ENCODE measurements at regions of chr1 and their contacts with region 1.

Region 1: GRCh38 chr1:21782868-21783678 is at the start of gene USP48:
- DNase-seq: peak; percentile 98
- ATAC-seq: peak; percentile 91
- H3K4me3 Mint-ChIP-seq: peak within 1 kb of the TSS; percentile 90
- H3K27ac Mint-ChIP-seq: peak within 1 kb of the TSS; percentile 100
- H3K4me1 Mint-ChIP-seq: peaks cover 19% of the 10 kb centered on the region
- H3K27me3 Mint-ChIP-seq: peaks cover 7% of the 10 kb centered on the region
- total RNA-seq, gene USP48: 79.6 to 85.2 TPM

Region 2: GRCh38 chr1:21793104-21793503 is 10.0 kb after region 1 on chr1:
- POLR2A ChIA-PET with region 1: interaction called, 10 read pairs
- DNase-seq: no peak
- ATAC-seq: no peak
- H3K4me3 Mint-ChIP-seq: no peak overlapping the region
- H3K27ac Mint-ChIP-seq: no peak overlapping the region
- H3K4me1 Mint-ChIP-seq: peaks cover 11% of the 10 kb centered on the region
- H3K27me3 Mint-ChIP-seq: peaks cover 6% of the 10 kb centered on the region

Region 3: DNA sequence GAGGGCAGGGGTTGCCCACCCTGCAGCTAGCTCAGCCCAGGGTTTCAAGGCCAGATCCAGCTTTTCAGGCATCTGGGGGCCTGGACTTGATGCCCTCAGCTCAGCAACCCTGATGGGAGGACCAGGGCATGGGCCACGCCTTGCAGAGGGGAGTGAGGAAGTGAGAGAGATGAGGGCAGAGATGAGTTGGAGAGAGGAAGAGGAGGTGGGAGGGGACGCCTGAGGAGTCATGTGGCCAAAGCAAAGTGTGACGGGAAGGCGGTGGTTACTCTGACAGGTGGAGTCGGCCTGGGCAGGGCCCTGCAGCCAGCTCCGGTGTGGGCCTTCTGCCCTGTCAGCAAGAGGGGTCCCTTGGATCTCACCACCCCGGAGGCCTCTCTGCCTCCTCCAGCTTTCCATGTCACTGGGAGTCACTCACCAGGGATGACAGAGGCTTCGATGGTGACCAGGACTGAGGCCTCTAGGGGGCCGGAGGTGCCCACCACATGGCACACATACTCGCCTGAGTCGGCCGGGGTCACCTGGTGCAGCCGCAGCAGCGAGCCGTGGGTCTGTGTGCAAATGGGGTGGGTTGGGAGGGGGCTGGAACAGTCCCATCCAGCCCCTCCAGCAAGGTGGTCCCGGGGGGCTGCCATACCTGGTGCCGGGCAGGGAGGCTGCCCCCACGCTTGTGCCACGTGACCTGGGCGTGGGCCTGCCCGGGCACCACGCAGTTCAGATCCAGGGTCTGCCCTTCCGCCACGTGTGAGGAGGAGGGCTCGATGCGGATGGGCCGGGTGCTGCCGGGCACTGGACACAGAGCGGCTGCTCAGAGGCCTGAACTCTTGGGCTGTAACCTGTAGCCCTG is 69.4 kb after region 1 on chr1:
- POLR2A ChIA-PET with region 1: no interaction called
- DNase-seq: no peak
- ATAC-seq: peak; percentile 67
- H3K4me3 Mint-ChIP-seq: peak overlapping the region; percentile 10
- H3K27ac Mint-ChIP-seq: peak overlapping the region; percentile 75
- H3K4me1 Mint-ChIP-seq: peaks cover 7% of the 10 kb centered on the region
- H3K27me3 Mint-ChIP-seq: no peaks in the 10 kb centered on the region

Measured in activated naive CD8-positive, alpha-beta T cell treated with anti-CD3 and anti-CD28 coated beads, Interleukin-2, amount 10 ng/mL, durations not matched to agents 7 days and 5 days (primary cell).